Gastrocnemius medialis (tissue), 4 donors: ENCODE measurements at regions of chr18 and their contacts with region 1.

Region 1: GRCh38 chr18:7566567-7567473 is at the start of gene PTPRM:
- DNase-seq: peak; percentile 93 to 95
- ATAC-seq: peak; percentile 76
- H3K4me3 ChIP-seq: peak within 1 kb of the TSS; percentile 75 to 98 (median 90)
- H3K27ac ChIP-seq: peak within 1 kb of the TSS; percentile 96 to 97 (median 96)
- H3K4me1 ChIP-seq: peaks cover 23 to 30% of the 10 kb centered on the region in 2 donors
- H3K27me3 ChIP-seq: no peaks in the 10 kb centered on the region
- CTCF ChIP-seq: peak in 4 of 5 experiments; percentile 76 to 92 (median 86)
- POLR2A ChIP-seq: peak; percentile 97
- total RNA-seq, gene PTPRM: 52.6 to 79.3 (median 63.8) TPM

Region 2: DNA sequence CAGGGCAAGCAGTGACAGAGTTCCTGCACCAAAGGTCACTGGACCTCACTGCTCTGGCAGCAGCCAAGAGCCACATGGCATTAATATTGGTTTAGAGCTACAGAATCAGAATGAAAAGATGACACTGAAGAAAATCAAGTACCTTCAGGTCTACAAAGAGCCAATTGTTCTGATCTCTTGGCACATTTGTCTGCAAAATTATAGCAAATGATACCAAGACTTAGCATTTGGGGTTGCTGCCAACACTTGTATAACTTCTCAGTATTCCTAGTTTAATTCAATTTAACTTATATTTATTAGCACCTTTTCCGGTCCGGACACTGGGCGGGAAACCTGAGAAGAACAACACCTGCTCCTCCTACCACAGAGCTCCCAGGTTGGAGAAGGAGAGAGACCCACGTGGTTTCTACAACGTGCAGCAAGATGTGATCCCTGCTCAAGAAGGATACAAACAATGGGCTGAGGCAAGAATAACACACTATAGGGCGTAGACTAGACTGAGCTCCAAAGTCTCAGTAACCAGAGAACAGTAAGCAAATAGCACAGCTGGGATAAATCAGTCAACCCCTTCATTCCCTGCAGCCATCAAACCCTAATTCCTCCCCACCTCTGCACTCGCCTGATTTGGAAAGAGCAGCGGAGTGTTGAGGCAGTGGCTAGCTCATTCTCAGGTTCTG is 333.5 kb before region 1 on chr18:
- in situ Hi-C with region 1: loop called in 2 of 4 experiments (anchors 25 kb)
- intact Hi-C with region 1: loop called (anchors 2 kb)
- DNase-seq: peak; percentile 78 to 80
- ATAC-seq: peak; percentile 55 to 59
- H3K4me3 ChIP-seq: peak overlapping the region; percentile 52 to 61 (median 54)
- H3K27ac ChIP-seq: peak overlapping the region; percentile 91 to 94 (median 92)
- H3K4me1 ChIP-seq: peaks cover 51 to 53% of the 10 kb centered on the region in 2 donors
- H3K27me3 ChIP-seq: no peaks in the 10 kb centered on the region
- CTCF ChIP-seq: no peak
- POLR2A ChIP-seq: peak in 1 of 2 donors; percentile 28

Region 3: GRCh38 chr18:7452331-7452730 is 114.5 kb before region 1 on chr18:
- in situ Hi-C with region 1: no loop called
- intact Hi-C with region 1: loop called (anchors 2 kb)
- DNase-seq: no peak
- ATAC-seq: no peak
- H3K4me3 ChIP-seq: no peak overlapping the region
- H3K27ac ChIP-seq: no peak overlapping the region
- H3K4me1 ChIP-seq: no peaks in the 10 kb centered on the region
- H3K27me3 ChIP-seq: no peaks in the 10 kb centered on the region
- CTCF ChIP-seq: peak; percentile 23 to 63 (median 56)
- POLR2A ChIP-seq: no peak

Region 4: GRCh38 chr18:7727361-7728076 is 160.7 kb after region 1 on chr18:
- in situ Hi-C with region 1: no loop called
- intact Hi-C with region 1: loop called (anchors 5 kb)
- DNase-seq: no peak
- ATAC-seq: no peak
- H3K4me3 ChIP-seq: no peak overlapping the region
- H3K27ac ChIP-seq: no peak overlapping the region
- H3K4me1 ChIP-seq: peaks cover 28 to 41% of the 10 kb centered on the region in 2 donors
- H3K27me3 ChIP-seq: no peaks in the 10 kb centered on the region
- CTCF ChIP-seq: no peak
- POLR2A ChIP-seq: no peak

Region 5: DNA sequence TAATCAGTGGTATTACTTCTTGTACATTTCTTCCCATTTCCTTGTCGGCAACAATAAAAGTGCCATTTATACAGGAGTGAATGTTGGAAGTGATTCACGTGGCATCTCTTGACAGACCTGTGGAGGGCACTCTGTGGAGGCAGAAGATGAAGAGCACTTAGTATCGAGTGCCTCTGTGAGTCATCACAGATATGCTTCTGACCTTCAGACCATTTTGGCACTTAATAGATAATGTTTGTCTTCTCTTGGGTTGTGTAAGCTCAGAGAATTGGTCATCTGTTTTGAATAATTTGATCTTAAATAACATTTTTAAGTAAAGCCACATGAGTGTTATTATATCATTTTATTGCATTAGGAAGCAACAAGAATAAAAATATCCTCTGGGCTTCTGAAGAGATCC is 305.7 kb after region 1 on chr18:
- in situ Hi-C with region 1: no loop called
- intact Hi-C with region 1: loop called (anchors 5 kb)
- DNase-seq: peak in 1 of 2 donors; percentile 37
- ATAC-seq: peak; percentile 58 to 71
- H3K4me3 ChIP-seq: no peak overlapping the region
- H3K27ac ChIP-seq: peak overlapping the region; percentile 64 to 85 (median 69)
- H3K4me1 ChIP-seq: peaks cover 34 to 40% of the 10 kb centered on the region in 2 donors
- H3K27me3 ChIP-seq: no peaks in the 10 kb centered on the region
- CTCF ChIP-seq: peak in 2 of 5 experiments; percentile 18 to 21
- POLR2A ChIP-seq: no peak

Region 6: DNA sequence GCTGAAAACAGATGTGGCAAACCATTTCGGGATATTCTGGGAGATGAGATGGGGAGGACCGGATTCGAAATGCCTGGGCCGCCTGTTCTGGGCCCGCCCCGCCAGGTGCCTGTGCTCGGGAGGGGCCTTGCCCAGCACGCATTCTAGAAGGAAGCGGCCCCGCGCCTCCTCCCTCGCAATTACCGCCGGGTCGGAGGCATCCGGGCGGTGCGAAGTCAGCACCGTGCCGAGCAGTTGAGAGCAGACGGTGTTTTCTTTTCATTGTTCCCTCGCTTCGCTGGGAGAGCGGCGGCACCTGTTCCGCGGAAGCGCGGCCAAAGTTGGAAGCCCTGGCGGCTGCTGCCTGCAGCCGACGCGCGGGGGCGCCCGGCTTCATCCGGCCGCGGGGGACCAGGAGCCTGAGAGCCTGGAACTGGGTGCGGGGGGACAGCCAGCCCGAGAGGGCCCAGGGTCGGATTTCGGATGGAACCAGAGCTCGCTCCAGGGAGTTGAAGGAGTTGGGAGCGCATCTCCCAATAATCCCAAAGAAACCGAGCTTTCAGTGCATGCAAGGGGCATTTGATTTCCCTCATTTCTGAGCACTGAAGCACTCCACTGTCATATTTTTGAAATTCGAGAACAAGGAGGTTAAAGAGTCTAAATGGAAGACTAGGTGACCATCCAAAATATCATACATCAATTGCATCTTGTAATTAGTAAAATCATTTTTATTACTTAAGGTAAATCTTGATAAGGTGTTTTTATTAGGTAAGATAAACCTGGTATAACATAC is 800.6 kb after region 1 on chr18:
- in situ Hi-C with region 1: no loop called
- intact Hi-C with region 1: loop called (anchors 10 kb)
- DNase-seq: peak; percentile 9 to 35
- ATAC-seq: peak; percentile 66 to 92
- H3K4me3 ChIP-seq: peak overlapping the region; percentile 32 to 64 (median 51)
- H3K27ac ChIP-seq: peak overlapping the region; percentile 28 to 52 (median 44)
- H3K4me1 ChIP-seq: peaks cover 12 to 29% of the 10 kb centered on the region in 2 donors
- H3K27me3 ChIP-seq: no peaks in the 10 kb centered on the region
- CTCF ChIP-seq: peak; percentile 27 to 79 (median 48)
- POLR2A ChIP-seq: no peak